Calu3 (cell line): ENCODE measurements at regions of chr12 and their contacts with region 1.

Region 1: DNA sequence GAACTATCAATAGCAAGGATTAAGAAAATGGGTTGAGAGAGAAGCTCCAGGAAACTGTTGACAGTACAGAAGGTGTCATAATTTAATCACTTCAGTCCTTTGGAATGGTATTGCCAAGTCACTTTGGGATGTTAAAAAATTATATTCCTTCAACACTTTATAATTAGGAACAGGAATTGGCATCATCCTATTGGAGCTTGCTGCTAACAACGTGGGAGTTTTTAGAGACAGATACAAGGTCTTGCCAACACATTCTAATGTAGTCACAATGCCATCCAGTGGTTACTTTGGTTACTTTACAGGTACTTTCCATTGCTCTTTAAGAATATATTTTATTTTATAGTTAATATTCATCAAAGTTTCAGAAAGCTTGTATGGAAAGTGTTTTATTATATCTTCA is 310.1 kb downstream of the SYT1 start:
- DNase-seq: peak; percentile 20
- H3K4me3 Mint-ChIP-seq: no peak overlapping the region
- H3K27ac Mint-ChIP-seq: no peak overlapping the region
- H3K4me1 Mint-ChIP-seq: no peaks in the 10 kb centered on the region
- H3K27me3 Mint-ChIP-seq: no peaks in the 10 kb centered on the region
- CTCF ChIP-seq: peak; percentile 35

Region 2: DNA sequence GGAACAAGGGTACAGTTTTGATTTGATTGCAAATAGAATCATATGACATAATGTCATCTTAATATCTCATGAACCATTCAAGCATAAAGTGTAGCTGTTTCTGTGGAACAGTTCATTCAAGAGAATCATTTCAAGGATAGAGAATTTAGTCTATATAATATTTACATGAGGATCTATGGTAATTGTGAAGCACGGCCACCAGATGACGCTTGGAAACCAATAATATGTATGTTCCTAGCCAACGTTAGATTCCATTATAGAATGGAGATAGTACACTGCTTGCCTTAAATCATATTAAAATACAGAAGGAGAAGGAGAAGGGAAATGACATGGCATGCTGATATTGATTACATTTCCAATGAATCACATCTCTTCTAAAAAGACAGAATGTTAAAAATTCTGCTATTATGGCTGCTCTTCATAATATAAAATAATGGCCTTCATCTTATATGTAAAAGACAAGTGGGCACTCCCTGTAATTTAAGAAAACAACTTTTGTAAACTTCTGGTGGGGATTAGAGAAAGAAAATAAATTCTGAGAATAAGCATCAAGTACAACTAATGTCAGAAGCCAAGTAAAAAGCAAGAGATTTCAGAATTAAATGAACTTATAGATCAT is 993.0 kb before region 1 on chr12:
- CTCF ChIA-PET with region 1: interaction called, 7 read pairs
- intact Hi-C with region 1: loop called (anchors 1 kb)
- DNase-seq: peak; percentile 51
- H3K4me3 Mint-ChIP-seq: no peak overlapping the region
- H3K27ac Mint-ChIP-seq: no peak overlapping the region
- H3K4me1 Mint-ChIP-seq: peaks cover 8% of the 10 kb centered on the region
- H3K27me3 Mint-ChIP-seq: no peaks in the 10 kb centered on the region
- CTCF ChIP-seq: peak; percentile 50

Region 3: DNA sequence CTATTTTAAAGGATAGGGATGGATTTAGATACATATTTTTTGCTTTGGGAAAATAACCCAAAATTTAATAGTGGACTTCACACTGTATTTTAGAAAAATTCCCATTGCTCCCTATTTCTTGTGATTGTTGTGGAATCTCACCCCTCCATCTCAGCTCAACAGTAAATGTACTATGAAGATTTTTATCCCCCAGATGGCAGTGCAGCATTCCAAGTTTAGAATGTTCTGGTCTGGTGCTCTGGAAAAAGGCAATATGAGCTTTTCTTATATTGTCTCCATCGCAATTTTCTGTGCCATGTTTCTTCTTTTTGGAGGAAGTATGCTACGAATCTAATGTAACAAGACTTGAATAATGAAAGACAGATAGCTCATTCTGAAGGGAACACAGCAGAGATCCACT is 781.7 kb before region 1 on chr12:
- CTCF ChIA-PET with region 1: no interaction called
- intact Hi-C with region 1: loop called (anchors 5 kb)
- DNase-seq: no peak
- H3K4me3 Mint-ChIP-seq: no peak overlapping the region
- H3K27ac Mint-ChIP-seq: no peak overlapping the region
- H3K4me1 Mint-ChIP-seq: no peaks in the 10 kb centered on the region
- H3K27me3 Mint-ChIP-seq: no peaks in the 10 kb centered on the region
- CTCF ChIP-seq: no peak

Region 4: DNA sequence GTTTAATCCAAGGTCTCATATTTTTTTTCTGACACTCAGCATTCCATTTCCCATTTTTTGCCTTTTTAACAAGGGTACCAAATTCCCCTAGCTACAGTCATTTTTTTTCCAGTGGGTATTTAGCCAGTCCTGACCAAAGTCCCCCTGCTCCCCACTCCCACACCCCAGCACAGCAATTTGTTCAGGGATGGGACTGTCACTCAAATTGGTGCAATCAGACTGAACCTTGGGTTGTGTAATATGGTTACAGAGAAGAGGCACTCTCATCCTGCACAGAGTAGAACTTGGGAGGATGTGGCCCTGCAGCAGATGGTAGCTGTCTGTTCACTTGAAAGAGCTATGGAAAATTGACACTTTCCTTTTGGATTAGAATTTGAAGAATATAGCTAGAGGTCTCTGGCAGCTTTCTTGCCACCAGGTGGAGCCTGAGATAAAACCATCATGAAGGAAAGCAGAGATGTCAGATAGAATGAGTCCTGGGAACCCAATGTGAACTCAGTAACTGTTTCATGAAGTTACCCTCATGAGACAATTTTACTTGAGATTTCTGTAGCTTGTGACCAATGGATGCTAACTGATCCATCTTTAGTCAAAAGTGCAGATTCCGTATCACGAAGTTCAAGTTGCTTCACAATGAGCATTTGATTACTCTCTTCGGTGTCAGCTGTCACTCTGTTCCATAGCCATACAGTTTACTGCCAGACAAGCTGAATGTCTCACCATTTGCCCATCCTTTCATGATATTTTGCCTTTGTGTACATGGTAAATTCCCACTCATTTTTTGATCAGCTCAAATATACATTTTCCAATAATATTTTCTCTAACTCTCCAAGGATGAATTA is 704.1 kb before region 1 on chr12:
- CTCF ChIA-PET with region 1: interaction called, 18 read pairs
- intact Hi-C with region 1: loop called (anchors 1 kb)
- DNase-seq: peak; percentile 58
- H3K4me3 Mint-ChIP-seq: no peak overlapping the region
- H3K27ac Mint-ChIP-seq: no peak overlapping the region
- H3K4me1 Mint-ChIP-seq: no peaks in the 10 kb centered on the region
- H3K27me3 Mint-ChIP-seq: no peaks in the 10 kb centered on the region
- CTCF ChIP-seq: peak; percentile 39

Region 5: GRCh38 chr12:78562368-78563205 is 612.0 kb before region 1 on chr12:
- CTCF ChIA-PET with region 1: no interaction called
- intact Hi-C with region 1: loop called (anchors 1 kb)
- DNase-seq: no peak
- H3K4me3 Mint-ChIP-seq: no peak overlapping the region
- H3K27ac Mint-ChIP-seq: no peak overlapping the region
- H3K4me1 Mint-ChIP-seq: peaks cover 18% of the 10 kb centered on the region
- H3K27me3 Mint-ChIP-seq: no peaks in the 10 kb centered on the region
- CTCF ChIP-seq: peak; percentile 28

Region 6: DNA sequence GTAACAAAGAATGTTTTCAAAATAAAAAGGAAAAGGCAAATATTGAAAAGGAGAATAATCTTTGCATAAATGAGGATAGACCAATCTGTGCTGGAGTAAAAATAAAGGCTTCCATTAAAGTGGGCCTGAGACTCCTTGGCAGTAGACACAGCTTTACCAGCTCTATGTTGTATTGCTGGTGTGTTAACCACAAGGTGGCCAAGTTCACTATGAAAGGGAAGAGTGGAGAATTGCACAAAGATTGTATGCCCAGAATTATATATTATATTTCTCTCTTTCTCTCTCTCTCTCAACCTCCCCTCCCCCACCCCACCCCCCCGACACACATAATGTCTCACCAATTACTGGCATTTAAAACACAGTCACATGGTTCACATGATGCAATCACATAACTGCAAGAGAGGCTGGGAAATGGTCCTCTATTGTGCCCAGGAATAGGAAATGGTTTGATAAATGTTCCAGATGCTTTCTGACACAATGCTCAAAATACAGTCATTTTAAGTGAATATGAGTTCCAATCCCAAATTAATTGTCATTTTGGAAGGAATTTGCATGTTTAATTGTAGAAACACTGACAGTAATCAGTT is 532.7 kb before region 1 on chr12:
- CTCF ChIA-PET with region 1: interaction called, 3 read pairs
- intact Hi-C with region 1: loop called (anchors 5 kb)
- DNase-seq: no peak
- H3K4me3 Mint-ChIP-seq: no peak overlapping the region
- H3K27ac Mint-ChIP-seq: no peak overlapping the region
- H3K4me1 Mint-ChIP-seq: peaks cover 11% of the 10 kb centered on the region
- H3K27me3 Mint-ChIP-seq: no peaks in the 10 kb centered on the region
- CTCF ChIP-seq: no peak

Region 7: GRCh38 chr12:79006306-79006705 is 168.3 kb before region 1 on chr12:
- CTCF ChIA-PET with region 1: no interaction called
- intact Hi-C with region 1: loop called (anchors 5 kb)
- DNase-seq: no peak
- H3K4me3 Mint-ChIP-seq: no peak overlapping the region
- H3K27ac Mint-ChIP-seq: no peak overlapping the region
- H3K4me1 Mint-ChIP-seq: no peaks in the 10 kb centered on the region
- H3K27me3 Mint-ChIP-seq: no peaks in the 10 kb centered on the region
- CTCF ChIP-seq: no peak

Region 8: DNA sequence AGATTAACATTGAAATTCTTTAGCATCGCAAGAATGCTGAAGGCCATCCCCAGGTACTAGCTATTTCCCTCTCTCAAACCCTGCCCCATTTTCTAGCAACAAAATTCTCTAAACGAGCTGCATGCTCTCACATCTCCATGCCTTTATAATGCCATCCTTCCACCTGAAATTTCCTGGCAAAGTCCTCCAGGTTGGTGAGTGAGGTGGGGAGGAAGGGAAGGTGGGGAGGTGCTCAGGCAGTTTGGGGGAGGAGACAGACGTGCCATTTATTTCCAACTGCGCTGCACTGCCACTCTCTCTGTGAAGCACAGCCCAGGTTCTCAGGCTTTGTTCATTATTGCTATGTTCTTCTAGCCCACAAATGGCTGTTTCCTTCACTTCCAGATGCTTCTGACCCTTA is 307.7 kb after region 1 on chr12:
- CTCF ChIA-PET with region 1: no interaction called
- intact Hi-C with region 1: no loop called
- DNase-seq: no peak
- H3K4me3 Mint-ChIP-seq: no peak overlapping the region
- H3K27ac Mint-ChIP-seq: no peak overlapping the region
- H3K4me1 Mint-ChIP-seq: no peaks in the 10 kb centered on the region
- H3K27me3 Mint-ChIP-seq: no peaks in the 10 kb centered on the region
- CTCF ChIP-seq: no peak